ENCODE measurements at regions of chr12 and their contacts with region 1.

Region 1: GRCh38 chr12:79737875-79738718 is 47.3 kb upstream of the PAWR start:
- DNase-seq: peak; percentile 71
- H3K4me3 ChIP-seq: no peak overlapping the region
- H3K27ac ChIP-seq: no peak overlapping the region
- H3K4me1 ChIP-seq: no peaks in the 10 kb centered on the region
- CTCF ChIP-seq: peak; percentile 92

Region 2: DNA sequence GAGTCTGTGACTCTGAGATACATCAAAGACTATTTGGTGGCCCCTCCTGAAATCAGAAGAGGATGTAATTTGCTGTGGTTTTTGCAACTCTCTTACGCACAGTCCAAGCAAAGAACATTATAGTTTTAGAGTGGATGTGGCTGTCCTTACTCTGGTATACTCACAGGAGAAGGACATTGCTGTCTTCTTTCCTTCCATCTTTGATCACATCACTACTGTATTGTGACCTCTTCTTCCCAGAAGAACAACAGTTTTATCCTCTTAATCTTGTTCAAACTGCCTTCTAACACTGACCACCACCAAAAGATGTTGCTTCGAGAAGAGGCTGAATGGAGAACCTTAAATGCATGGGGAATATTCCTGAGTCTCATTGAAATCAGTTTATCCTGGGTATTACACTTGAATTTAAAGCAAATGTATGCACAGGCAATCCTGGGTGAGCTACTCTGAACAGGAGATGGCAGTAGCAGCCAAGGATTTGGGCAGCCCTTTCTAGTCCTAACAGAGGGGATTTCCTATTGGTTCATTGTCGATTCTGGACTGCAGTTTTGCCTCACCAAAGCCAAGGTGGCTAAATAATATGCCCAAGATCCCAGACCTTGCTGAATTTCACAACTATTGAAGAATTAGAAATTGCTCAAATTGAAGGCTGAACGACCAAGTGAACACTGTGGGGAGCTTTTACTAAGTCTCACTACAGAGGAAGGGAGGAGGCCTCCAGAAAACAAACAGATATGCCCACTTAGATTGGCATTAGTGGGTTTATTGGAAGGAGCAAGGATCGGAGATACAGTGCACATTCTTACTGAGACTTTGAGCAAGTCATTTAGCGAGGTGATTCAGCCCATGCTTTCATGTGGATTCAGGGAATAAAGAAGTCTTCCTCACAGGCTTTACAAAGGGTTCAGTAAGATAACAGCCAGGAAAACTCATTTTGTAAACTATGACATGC is 330.1 kb before region 1 on chr12:
- CTCF ChIA-PET with region 1: no interaction called
- POLR2A ChIA-PET with region 1: no interaction called
- intact Hi-C with region 1: loop called (anchors 5 kb)
- DNase-seq: peak; percentile 42
- H3K4me3 ChIP-seq: no peak overlapping the region
- H3K27ac ChIP-seq: no peak overlapping the region
- H3K4me1 ChIP-seq: no peaks in the 10 kb centered on the region
- CTCF ChIP-seq: peak; percentile 73

Region 3: DNA sequence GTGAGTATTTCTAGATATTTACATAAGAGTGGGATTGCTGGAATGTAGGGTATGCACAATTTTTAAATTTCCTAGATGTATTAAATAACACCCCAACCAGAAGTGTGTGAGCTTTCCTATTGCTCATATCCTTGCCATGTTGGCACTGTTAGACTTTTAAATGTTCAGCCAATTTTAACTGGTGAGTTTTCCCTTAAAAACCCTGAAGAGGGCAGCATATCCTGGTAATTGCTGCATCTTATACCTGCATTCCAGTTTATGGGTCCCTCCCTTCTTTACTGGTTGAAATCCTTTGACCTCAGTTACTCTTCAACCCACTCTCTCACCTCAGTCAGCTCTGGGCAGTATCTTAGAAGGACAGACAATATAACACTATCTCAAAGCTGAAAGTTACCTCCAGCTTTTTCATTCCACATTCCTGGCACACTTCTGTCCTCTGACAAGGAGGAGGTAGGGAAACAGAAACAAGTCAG is 317.9 kb before region 1 on chr12:
- CTCF ChIA-PET with region 1: no interaction called
- POLR2A ChIA-PET with region 1: no interaction called
- intact Hi-C with region 1: loop called (anchors 1 kb)
- DNase-seq: peak; percentile 14
- H3K4me3 ChIP-seq: no peak overlapping the region
- H3K27ac ChIP-seq: no peak overlapping the region
- H3K4me1 ChIP-seq: no peaks in the 10 kb centered on the region
- CTCF ChIP-seq: peak; percentile 73

Region 4: GRCh38 chr12:79547735-79548609 is 190.1 kb before region 1 on chr12:
- CTCF ChIA-PET with region 1: no interaction called
- POLR2A ChIA-PET with region 1: no interaction called
- intact Hi-C with region 1: loop called (anchors 1 kb)
- DNase-seq: peak; percentile 51
- H3K4me3 ChIP-seq: no peak overlapping the region
- H3K27ac ChIP-seq: no peak overlapping the region
- H3K4me1 ChIP-seq: no peaks in the 10 kb centered on the region
- CTCF ChIP-seq: peak; percentile 90